Ascending aorta (tissue), 2 donors: ENCODE measurements at regions of chrX and their contacts with region 1.

Region 1: DNA sequence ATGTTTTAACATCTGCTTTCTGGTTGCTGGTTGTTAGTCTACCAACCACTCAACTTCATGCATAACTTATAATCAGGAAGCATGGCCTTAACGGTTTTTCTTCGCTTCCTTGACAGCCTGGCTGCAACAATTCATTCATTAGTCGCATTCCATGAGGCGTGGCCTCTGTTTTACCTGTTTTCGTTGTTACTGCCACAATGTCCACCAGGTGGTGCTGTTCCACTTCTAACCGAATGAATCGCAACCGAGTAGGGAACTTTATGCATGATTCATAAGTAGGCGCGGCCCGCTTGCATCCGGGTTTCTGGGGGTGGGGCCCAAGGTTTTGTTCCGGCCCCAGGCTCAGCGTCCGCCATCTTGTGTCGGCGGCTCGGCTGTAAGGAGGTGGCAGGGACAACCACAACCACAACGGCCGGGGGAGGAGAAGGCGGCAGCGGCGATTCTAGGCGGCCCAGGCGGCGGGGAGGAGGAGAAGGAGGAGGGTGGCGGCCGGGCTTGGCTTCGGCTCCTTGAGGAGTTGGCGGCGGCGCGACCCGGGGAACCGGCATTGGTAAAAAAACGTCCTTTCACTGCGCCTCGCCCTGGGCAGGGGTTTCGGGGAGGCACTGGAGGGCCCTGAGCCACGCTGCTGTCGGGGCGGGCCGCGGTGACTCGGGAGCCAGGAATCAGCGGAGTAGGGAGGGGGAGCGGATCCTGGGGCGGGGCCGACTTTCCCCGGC is at the start of gene UBA1:
- DNase-seq: peak; percentile 92 to 99
- H3K4me3 ChIP-seq: peak within 1 kb of the TSS; percentile 72 to 99
- H3K27ac ChIP-seq: peak within 1 kb of the TSS; percentile 95 to 99
- H3K4me1 ChIP-seq: peaks cover 12 to 24% of the 10 kb centered on the region in 2 donors
- H3K27me3 ChIP-seq: no peaks in the 10 kb centered on the region
- CTCF ChIP-seq: peak; percentile 86 to 93 (median 90)
- total RNA-seq, gene UBA1: 162 TPM

Region 2: GRCh38 chrX:47144626-47145394 is 48.8 kb before region 1 on chrX and contains the starts of genes NDUFB11 and RBM10:
- intact Hi-C with region 1: loop called (anchors 2 kb)
- DNase-seq: peak; percentile 80 to 97
- H3K4me3 ChIP-seq: peak within 1 kb of the TSS; percentile 64 to 66
- H3K27ac ChIP-seq: peak within 1 kb of the TSS; percentile 86 to 95
- H3K4me1 ChIP-seq: no peaks in the 10 kb centered on the region
- H3K27me3 ChIP-seq: no peaks in the 10 kb centered on the region
- CTCF ChIP-seq: peak; percentile 57 to 83 (median 66)
- total RNA-seq, gene NDUFB11: 122 TPM
- total RNA-seq, gene RBM10: 52.4 TPM

Region 3: DNA sequence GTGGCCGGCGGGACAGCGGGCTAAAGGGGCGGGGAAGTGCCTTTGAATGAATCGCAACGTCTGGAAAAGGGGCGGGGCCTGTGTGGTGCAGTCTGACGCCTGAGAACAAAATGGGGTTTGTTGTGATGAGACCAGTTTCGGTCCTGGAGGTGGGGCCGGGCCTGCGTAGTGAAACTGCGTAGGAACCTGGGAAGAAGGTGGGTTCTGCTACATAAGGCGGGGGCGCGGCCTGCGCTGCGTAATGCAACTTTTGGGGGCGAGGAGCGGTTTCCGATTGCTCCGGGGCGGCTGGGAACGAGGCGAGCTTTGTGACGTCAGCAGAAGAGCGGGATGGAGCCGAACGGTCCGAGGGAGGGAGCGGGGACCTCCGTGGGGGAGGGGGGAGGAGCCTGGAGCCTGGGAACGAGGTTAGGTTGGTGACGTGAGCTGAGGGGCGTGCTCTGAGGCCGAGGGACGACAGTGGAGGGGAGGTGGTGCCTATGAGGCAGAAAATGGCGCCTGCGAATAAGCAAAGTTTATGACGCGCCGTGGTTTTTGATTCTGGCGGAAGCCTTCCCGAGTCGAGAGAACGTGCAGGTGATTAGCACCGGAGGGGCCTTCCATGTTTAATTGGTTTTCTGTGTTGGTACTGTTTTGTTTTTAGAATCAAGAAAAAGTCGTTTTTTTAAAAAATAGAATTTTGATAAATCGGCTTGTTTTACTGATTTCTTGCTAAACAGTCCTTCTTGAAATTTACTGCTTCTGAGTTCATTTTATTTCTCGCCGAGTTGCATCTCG is 39.9 kb after region 1 on chrX:
- intact Hi-C with region 1: loop called (anchors 5 kb)
- DNase-seq: peak; percentile 96 to 97
- H3K4me3 ChIP-seq: peak overlapping the region; percentile 56 to 88
- H3K27ac ChIP-seq: peak overlapping the region; percentile 89 to 98
- H3K4me1 ChIP-seq: peaks cover 0 to 3% of the 10 kb centered on the region in 2 donors
- H3K27me3 ChIP-seq: no peaks in the 10 kb centered on the region
- CTCF ChIP-seq: no peak

Region 4: GRCh38 chrX:47384502-47384901 is 190.9 kb after region 1 on chrX:
- intact Hi-C with region 1: loop called (anchors 1 kb)
- DNase-seq: peak in 1 of 2 donors; percentile 84
- H3K4me3 ChIP-seq: no peak overlapping the region
- H3K27ac ChIP-seq: no peak overlapping the region
- H3K4me1 ChIP-seq: no peaks in the 10 kb centered on the region
- H3K27me3 ChIP-seq: no peaks in the 10 kb centered on the region
- CTCF ChIP-seq: peak; percentile 43 to 73 (median 71)

Region 5: DNA sequence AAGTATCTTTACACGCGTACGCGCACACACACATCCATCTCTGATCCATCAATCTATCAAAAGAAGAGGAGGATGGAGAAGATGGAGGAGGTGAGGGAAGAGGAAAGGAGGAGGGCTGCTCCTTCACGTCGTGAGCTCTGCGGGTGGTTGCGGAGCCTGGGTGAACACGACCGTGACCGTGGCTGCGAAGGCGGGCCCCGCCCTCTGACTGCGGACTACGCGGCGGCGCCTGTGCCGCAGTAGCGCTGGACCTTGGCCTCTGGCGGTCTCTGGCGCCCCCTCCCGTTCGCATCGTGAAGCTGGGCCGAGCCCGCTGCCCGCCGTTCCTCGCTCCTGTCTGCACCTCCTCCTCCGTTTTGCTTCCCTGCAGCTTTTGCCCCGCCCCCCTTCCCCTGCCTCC is 329.7 kb after region 1 on chrX:
- intact Hi-C with region 1: loop called (anchors 1 kb)
- DNase-seq: peak in 1 of 2 donors; percentile 87
- H3K4me3 ChIP-seq: peak overlapping the region; percentile 53 to 65
- H3K27ac ChIP-seq: no peak overlapping the region
- H3K4me1 ChIP-seq: no peaks in the 10 kb centered on the region
- H3K27me3 ChIP-seq: no peaks in the 10 kb centered on the region
- CTCF ChIP-seq: peak; percentile 80 to 85 (median 82)